Stomach (tissue), 19 donors: ENCODE measurements at regions of chr2 and their contacts with region 1.

Region 1: GRCh38 chr2:177334940-177335543 is 57.5 kb upstream of the AGPS start:
- DNase-seq: peak in 1 of 2 donors; percentile 76
- H3K4me3 ChIP-seq: no peak overlapping the region
- H3K27ac ChIP-seq: no peak overlapping the region
- H3K4me1 ChIP-seq: peaks cover 0 to 17% (median 6%) of the 10 kb centered on the region in 4 donors
- H3K27me3 ChIP-seq: no peaks in the 10 kb centered on the region
- CTCF ChIP-seq: peak in 5 of 7 experiments; percentile 80 to 94 (median 88)
- EP300 ChIP-seq: no peak
- POLR2A ChIP-seq: no peak

Region 2: GRCh38 chr2:177413703-177414102 is 78.7 kb after region 1 on chr2:
- intact Hi-C with region 1: loop called (anchors 5 kb)
- DNase-seq: no peak
- H3K4me3 ChIP-seq: no peak overlapping the region
- H3K27ac ChIP-seq: no peak overlapping the region
- H3K4me1 ChIP-seq: peaks cover 0 to 20% (median 13%) of the 10 kb centered on the region in 4 donors
- H3K27me3 ChIP-seq: no peaks in the 10 kb centered on the region
- CTCF ChIP-seq: no peak
- EP300 ChIP-seq: no peak
- POLR2A ChIP-seq: no peak

Region 3: DNA sequence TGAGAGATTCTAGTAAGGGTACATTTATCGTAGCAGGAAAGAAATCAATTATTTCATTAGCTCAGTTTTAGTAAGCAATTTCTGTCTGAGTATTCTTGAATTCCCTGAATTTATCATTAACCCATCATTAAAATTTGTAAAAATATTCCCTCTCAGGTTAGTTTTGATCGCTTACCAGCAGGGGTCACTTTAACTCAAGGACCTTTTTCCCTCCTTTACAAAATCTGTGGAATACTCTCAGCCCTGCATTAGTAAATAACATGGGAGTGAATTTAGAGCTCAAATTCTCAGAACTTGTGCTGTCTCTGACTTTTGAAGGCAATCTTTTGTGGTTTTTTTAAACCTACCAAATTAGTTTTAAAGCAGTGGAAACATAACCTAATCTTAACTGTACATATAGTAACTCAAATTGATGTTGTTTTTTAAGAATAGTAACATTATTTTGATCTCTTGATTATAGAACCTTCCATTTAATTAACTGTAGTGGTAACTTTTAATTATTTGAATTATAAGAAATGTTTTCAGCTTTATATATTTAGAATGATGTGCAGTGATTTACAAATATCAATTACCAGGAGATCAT is 154.8 kb after region 1 on chr2:
- intact Hi-C with region 1: no loop called
- DNase-seq: peak in 1 of 2 donors; percentile 75
- H3K4me3 ChIP-seq: no peak overlapping the region
- H3K27ac ChIP-seq: no peak overlapping the region
- H3K4me1 ChIP-seq: no peaks in the 10 kb centered on the region
- H3K27me3 ChIP-seq: no peaks in the 10 kb centered on the region
- CTCF ChIP-seq: peak in 4 of 7 experiments; percentile 21 to 51 (median 46)
- EP300 ChIP-seq: no peak
- POLR2A ChIP-seq: no peak